ENCODE measurements at regions of chrX and their contacts with region 1.

Region 1: DNA sequence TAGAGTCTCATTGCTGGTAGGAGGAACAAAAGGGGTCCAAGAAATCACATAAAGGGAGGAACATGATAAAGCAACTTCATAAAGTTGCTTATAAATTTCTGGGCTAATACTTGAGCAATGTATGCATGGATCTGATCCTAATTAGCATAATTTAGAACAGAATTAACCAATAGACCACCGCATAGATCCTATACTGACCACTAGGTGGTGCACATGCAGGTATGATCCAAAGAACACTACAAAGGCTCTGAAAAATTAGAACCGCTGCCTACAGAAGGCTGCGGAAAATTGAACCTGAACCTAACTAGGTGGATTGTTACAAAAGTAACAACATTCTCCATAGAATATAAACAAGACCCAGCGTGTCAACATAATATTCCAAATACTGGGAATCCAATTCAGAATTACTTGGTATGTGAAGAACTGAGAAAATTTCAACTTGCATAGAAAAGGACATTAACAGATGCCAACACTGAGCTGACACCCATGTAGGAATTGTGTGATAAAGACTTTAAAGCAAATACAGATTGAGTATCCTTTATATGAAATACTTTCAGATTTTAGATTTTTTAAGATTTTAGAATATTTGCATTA is 23.3 kb downstream of the BRCC3 start:
- DNase-seq: no peak
- H3K4me3 ChIP-seq: no peak overlapping the region
- H3K27ac ChIP-seq: no peak overlapping the region
- H3K27me3 ChIP-seq: no peaks in the 10 kb centered on the region
- CTCF ChIP-seq: peak; percentile 62

Region 2: GRCh38 chrX:155070975-155071693 is 23.4 kb before region 1 on chrX and contains the starts of genes BRCC3, CMC4 and MTCP1:
- CTCF ChIA-PET with region 1: interaction called, 13 read pairs
- POLR2A ChIA-PET with region 1: no interaction called
- DNase-seq: peak; percentile 36
- H3K4me3 ChIP-seq: peak within 1 kb of the TSS; percentile 79
- H3K27ac ChIP-seq: peak within 1 kb of the TSS; percentile 75
- H3K27me3 ChIP-seq: no peaks in the 10 kb centered on the region
- CTCF ChIP-seq: no peak
- polyA plus RNA-seq, gene BRCC3: 18.7 and 23.0 TPM in 2 replicates
- polyA plus RNA-seq, gene CMC4: 9.9 and 10.1 TPM in 2 replicates
- polyA plus RNA-seq, gene MTCP1: 10.5 and 17.4 TPM in 2 replicates

Region 3: GRCh38 chrX:155105919-155106318 is 11.4 kb after region 1 on chrX:
- CTCF ChIA-PET with region 1: interaction called, 27 read pairs
- POLR2A ChIA-PET with region 1: no interaction called
- DNase-seq: no peak
- H3K4me3 ChIP-seq: no peak overlapping the region
- H3K27ac ChIP-seq: no peak overlapping the region
- H3K27me3 ChIP-seq: no peaks in the 10 kb centered on the region
- CTCF ChIP-seq: no peak

Region 4: GRCh38 chrX:155148724-155149537 is 54.4 kb after region 1 on chrX:
- CTCF ChIA-PET with region 1: interaction called, 10 read pairs
- POLR2A ChIA-PET with region 1: no interaction called
- DNase-seq: no peak
- H3K4me3 ChIP-seq: no peak overlapping the region
- H3K27ac ChIP-seq: no peak overlapping the region
- H3K27me3 ChIP-seq: no peaks in the 10 kb centered on the region
- CTCF ChIP-seq: peak; percentile 56

Region 5: DNA sequence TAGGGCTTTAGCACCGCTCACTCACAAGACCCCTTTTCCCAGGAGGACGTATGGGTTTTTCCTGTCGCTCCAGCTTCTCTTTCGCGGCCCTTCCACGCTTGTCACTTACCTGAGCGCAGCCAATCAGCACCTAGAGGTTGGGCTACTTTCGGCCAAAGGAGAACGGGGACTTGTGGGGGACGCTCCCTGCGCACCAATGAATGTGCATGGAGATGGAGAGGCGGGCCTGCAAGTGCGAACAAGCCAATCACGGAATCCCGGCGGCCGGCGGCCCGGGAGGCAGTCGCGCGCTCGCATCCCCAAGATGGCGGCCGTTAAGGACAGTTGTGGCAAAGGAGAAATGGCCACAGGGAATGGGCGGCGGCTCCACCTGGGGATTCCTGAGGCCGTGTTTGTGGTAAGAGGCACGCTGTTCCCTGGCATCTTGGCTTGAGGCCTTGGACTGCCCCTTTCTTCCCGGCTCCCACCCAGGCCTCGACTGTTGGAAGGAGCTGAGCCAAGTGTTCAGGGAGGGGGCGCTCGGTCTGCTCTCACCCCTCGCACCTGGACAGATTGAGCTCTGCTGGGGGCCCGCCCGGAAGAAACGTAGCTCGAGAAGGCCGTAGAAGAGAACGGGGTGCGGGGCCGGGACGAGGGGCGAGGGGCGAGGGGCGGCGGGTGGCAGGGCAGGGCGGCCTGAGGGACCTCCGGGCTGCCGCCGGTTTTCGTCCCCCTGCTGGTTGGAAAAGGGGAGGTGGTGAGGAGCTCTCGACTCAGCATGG is 121.8 kb after region 1 on chrX and contains the start of gene VBP1:
- CTCF ChIA-PET with region 1: interaction called, 20 read pairs
- POLR2A ChIA-PET with region 1: no interaction called
- DNase-seq: peak; percentile 88
- H3K4me3 ChIP-seq: peak within 1 kb of the TSS; percentile 87
- H3K27ac ChIP-seq: peak within 1 kb of the TSS; percentile 75
- H3K27me3 ChIP-seq: no peaks in the 10 kb centered on the region
- CTCF ChIP-seq: peak; percentile 52
- polyA plus RNA-seq, gene VBP1: 46.7 and 61.4 TPM in 2 replicates